Endothelial cell of umbilical vein (primary cell): ENCODE measurements at regions of chr10 and their contacts with region 1.

Region 1: DNA sequence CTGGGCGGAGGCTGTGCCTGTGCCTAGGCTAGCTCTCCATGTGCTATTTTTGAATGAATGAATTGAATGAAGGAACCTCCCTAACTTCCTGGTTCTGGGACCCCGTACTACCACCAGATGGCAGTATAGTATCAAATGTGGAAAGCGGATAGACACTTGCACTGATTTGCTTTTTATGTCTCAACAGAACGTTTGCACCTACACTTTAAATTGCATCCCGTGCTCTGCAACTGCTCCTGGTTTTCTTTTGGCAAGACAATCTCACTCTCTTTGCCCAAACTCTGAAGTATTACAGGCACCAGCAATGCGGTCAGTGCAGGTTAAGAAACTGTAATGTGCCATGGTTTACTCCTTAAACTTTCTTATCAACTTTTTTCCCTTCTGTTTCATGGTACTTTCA is 6.5 kb downstream of the FZD8 start:
- DNase-seq: peak; percentile 79
- H3K4me3 ChIP-seq: no peak overlapping the region
- H3K27ac ChIP-seq: no peak overlapping the region
- H3K4me1 ChIP-seq: peaks cover 18% of the 10 kb centered on the region
- H3K27me3 ChIP-seq: peaks cover 2 to 3% of the 10 kb centered on the region in 2 experiments
- CTCF ChIP-seq: peak; percentile 77 to 85
- POLR2A ChIP-seq: no peak

Region 2: DNA sequence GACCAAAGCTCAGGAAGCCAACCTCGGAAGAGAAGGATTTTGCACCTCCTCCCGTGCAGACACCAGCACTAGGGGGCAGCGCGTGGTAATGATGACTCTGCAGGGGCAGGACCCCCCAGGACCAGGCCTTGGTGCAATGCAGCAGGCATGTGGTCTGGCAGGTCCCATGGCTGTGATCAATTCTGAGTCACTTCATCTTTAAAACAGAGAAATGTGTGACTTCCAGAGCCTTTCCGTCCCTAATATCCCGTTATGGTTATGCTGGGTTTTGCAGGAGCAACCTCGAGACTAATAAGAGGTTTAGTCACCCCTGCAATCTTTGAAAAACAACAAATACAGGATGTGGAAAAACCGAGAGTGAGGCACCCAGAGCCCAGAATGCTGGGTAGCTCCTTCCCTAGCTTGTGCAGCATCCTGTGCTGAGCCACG is 60.6 kb before region 1 on chr10:
- CTCF ChIA-PET with region 1: interaction called, 4 read pairs
- POLR2A ChIA-PET with region 1: no interaction called
- dilution Hi-C with region 1: no loop called
- intact Hi-C with region 1: loop called (anchors 5 kb)
- DNase-seq: peak; percentile 85
- H3K4me3 ChIP-seq: no peak overlapping the region
- H3K27ac ChIP-seq: peak overlapping the region; percentile 65
- H3K4me1 ChIP-seq: peaks cover 31% of the 10 kb centered on the region
- H3K27me3 ChIP-seq: no peaks in the 10 kb centered on the region
- CTCF ChIP-seq: peak; percentile 32 to 36
- POLR2A ChIP-seq: no peak

Region 3: DNA sequence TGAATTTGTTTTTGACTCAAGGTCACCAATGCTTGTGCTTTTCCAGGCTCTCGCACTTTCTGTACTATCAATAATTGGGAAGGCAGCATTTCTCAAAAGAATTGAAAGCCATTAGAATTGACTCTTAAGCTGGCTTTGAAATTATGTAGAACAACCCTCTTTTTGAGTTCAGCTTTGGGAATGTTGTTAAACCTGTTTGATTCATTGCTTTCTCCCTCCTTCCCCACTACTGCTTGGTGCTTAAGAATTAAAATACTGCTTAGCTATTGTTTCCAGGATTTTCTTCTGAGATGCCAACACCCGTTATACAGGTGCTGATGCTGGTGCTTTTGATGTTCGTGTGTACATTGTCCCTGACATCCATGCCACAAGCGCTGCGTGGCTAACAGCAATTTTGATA is 22.0 kb after region 1 on chr10:
- CTCF ChIA-PET with region 1: no interaction called
- POLR2A ChIA-PET with region 1: no interaction called
- dilution Hi-C with region 1: no loop called
- intact Hi-C with region 1: no loop called
- DNase-seq: no peak
- H3K4me3 ChIP-seq: no peak overlapping the region
- H3K27ac ChIP-seq: no peak overlapping the region
- H3K4me1 ChIP-seq: no peaks in the 10 kb centered on the region
- H3K27me3 ChIP-seq: peaks cover 0 to 7% of the 10 kb centered on the region in 2 experiments
- CTCF ChIP-seq: no peak
- POLR2A ChIP-seq: no peak

Region 4: GRCh38 chr10:35916791-35917190 is 281.2 kb after region 1 on chr10:
- CTCF ChIA-PET with region 1: interaction called, 85 read pairs
- POLR2A ChIA-PET with region 1: no interaction called
- dilution Hi-C with region 1: no loop called
- intact Hi-C with region 1: loop called (anchors 5 kb)
- DNase-seq: no peak
- H3K4me3 ChIP-seq: no peak overlapping the region
- H3K27ac ChIP-seq: no peak overlapping the region
- H3K4me1 ChIP-seq: peaks cover 20% of the 10 kb centered on the region
- H3K27me3 ChIP-seq: no peaks in the 10 kb centered on the region
- CTCF ChIP-seq: peak in 1 of 2 donors; percentile 20
- POLR2A ChIP-seq: no peak

Region 5: DNA sequence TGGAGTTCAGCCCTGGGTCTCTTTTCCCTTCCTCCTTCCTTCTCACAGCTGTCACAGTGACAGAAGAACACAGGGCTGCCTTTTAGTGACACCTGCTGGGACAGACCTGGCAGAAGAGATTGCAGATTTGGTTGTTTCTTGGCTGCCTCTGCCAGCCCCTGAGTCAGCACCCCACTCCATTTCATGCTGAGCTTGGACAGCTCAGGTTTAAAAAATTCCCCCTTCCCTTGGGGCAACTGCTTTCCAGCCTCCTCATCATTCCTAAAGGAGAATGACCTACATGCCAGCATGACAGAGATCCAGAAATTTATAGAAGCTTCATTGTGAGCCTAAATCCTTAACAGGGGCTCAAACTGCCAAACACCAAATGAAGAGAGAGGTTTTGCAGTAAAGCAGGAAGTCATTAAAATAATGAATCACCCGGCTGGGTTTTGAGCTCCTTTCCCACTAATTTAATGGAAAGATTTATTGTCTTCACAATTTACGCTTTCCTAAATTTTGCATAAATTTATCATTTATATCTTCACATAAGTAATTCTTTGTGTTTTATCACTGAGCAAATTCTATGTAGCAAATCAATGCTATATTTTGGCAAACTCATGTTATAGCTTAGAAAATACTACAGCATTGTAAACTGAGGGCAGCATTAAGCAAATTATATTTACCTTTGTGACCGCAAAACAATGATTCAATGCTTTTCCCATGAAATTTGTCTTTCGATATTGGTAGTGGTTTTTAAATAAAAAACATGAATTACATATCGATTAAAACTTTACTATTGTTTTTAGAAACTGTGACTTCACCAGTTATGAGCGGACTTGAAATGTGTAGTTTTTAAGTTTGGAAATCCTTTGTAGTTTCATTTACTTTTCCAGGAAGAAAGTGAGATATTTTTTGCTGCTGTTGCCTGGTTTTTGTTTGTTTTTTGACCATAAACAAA is 1090.3 kb after region 1 on chr10:
- CTCF ChIA-PET with region 1: interaction called, 16 read pairs
- POLR2A ChIA-PET with region 1: no interaction called
- dilution Hi-C with region 1: no loop called
- intact Hi-C with region 1: loop called (anchors 1 kb)
- DNase-seq: peak; percentile 66
- H3K4me3 ChIP-seq: no peak overlapping the region
- H3K27ac ChIP-seq: no peak overlapping the region
- H3K4me1 ChIP-seq: no peaks in the 10 kb centered on the region
- H3K27me3 ChIP-seq: peaks cover 0 to 3% of the 10 kb centered on the region in 2 experiments
- CTCF ChIP-seq: peak; percentile 7 to 37
- POLR2A ChIP-seq: no peak

Region 6: GRCh38 chr10:36779234-36779846 is 1143.8 kb after region 1 on chr10:
- CTCF ChIA-PET with region 1: interaction called, 316 read pairs
- POLR2A ChIA-PET with region 1: no interaction called
- dilution Hi-C with region 1: no loop called
- intact Hi-C with region 1: loop called (anchors 1 kb)
- DNase-seq: peak; percentile 87
- H3K4me3 ChIP-seq: no peak overlapping the region
- H3K27ac ChIP-seq: no peak overlapping the region
- H3K4me1 ChIP-seq: no peaks in the 10 kb centered on the region
- H3K27me3 ChIP-seq: no peaks in the 10 kb centered on the region
- CTCF ChIP-seq: peak; percentile 57 to 64
- POLR2A ChIP-seq: no peak